WTC11 (cell line): ENCODE measurements at regions of chr2 and their contacts with region 1.

Region 1: GRCh38 chr2:110858135-110858725 is 125.9 kb downstream of the ACOXL start:
- DNase-seq: no peak
- ATAC-seq: peak; percentile 21; the same call in 1 of the 2 replicates
- H3K4me3 Mint-ChIP-seq: no peak overlapping the region
- H3K27ac Mint-ChIP-seq: peak overlapping the region; percentile 8
- H3K4me1 Mint-ChIP-seq: peaks cover 43% of the 10 kb centered on the region
- H3K27me3 Mint-ChIP-seq: no peaks in the 10 kb centered on the region
- CTCF ChIP-seq: no peak

Region 2: GRCh38 chr2:110876243-110876999 is 18.2 kb after region 1 on chr2:
- CTCF ChIA-PET with region 1: interaction called, 13 read pairs
- POLR2A ChIA-PET with region 1: no interaction called
- DNase-seq: peak; percentile 56
- ATAC-seq: no peak; the same call in none of the 2 replicates
- H3K4me3 Mint-ChIP-seq: no peak overlapping the region
- H3K27ac Mint-ChIP-seq: no peak overlapping the region
- H3K4me1 Mint-ChIP-seq: peaks cover 19% of the 10 kb centered on the region
- H3K27me3 Mint-ChIP-seq: no peaks in the 10 kb centered on the region
- CTCF ChIP-seq: peak; percentile 53; the same call in 1 of the 2 replicates

Region 3: DNA sequence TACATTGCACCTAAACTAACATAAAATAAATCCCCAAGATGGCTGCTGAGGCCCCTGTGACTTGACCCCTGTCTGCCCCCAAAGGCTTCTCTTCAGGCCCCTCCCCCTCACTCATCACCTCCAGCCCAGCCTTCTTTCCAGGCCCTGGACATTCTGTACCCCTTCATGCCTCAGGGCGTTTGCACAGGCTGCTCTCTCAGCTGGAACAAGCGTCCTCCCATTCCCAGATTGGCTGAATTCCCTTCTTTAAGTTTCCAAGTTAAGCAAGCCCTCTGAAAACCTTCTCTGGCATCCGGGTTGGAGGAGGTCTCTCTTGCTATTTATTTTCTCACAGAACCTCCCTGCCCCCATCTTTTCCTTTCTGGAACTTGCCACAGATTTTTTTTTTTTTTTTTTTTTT is 97.3 kb after region 1 on chr2:
- CTCF ChIA-PET with region 1: no interaction called
- POLR2A ChIA-PET with region 1: no interaction called
- DNase-seq: no peak
- ATAC-seq: no peak
- H3K4me3 Mint-ChIP-seq: no peak overlapping the region
- H3K27ac Mint-ChIP-seq: no peak overlapping the region
- H3K4me1 Mint-ChIP-seq: peaks cover 7% of the 10 kb centered on the region; the same call in 1 of the 2 replicates
- H3K27me3 Mint-ChIP-seq: no peaks in the 10 kb centered on the region
- CTCF ChIP-seq: no peak